A549 (cell line): ENCODE measurements at regions of chr20 and their contacts with region 1.

Region 1: GRCh38 chr20:34955232-34956040 is at the starts of genes GSS and MYH7B:
- DNase-seq: peak; percentile 96 to 97
- ATAC-seq: peak; percentile 97 to 98
- H3K4me3 ChIP-seq: peak within 1 kb of the TSS; percentile 59
- H3K27ac ChIP-seq: peak within 1 kb of the TSS; percentile 82 to 94
- H3K4me1 ChIP-seq: peaks cover 11% of the 10 kb centered on the region
- CTCF ChIP-seq: peak; percentile 62
- EP300 ChIP-seq: no peak
- POLR2A ChIP-seq: peak; percentile 95
- RAD21 ChIP-seq: peak; percentile 70 to 86
- polyA plus RNA-seq, gene GSS: 92.4 and 107 TPM in 2 replicates
- polyA plus RNA-seq, gene MYH7B: 0.03 and 0.04 TPM in 2 replicates

Region 2: DNA sequence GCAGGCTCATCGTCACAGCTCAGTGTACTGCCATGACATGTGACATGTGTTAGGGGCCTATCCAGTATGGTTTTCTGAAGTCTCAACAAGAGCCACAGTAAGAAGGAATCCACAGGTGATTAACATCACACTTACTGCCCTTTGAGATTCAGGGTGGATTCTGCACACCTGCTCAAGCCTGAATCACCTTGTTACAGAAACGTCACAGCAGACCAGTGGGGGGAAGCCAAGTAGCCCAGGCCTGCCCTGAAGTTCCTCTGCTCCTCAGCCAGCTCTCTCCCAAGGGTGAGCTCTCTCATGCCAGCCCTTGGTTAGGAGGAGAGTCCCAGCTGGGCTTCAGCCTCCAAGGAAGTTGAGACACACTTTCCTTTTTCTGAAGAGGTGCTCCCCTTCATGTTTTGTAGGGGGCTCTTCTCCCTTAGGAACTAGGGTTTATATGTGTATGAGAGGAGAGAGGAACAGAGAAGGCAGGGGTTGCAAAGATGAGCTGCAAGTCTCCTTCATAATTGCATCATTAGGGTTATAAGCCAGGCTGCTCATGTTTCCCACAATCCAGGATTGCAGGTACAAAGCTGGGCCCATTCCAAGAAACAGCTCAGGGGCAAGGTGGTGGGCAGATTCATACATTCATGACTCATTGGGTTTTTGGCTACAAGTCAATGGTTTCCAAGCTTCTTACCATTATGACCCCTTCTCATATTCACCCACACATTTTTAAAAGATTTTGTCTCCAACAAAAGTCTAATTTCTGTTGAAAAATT is 11.4 kb before region 1 on chr20:
- CTCF ChIA-PET with region 1: interaction called, 19 read pairs
- POLR2A ChIA-PET with region 1: interaction called, 3 read pairs
- DNase-seq: no peak
- ATAC-seq: no peak
- H3K4me3 ChIP-seq: no peak overlapping the region
- H3K27ac ChIP-seq: peak overlapping the region; percentile 57 to 75; a peak in 5 of 6 replicates
- H3K4me1 ChIP-seq: peaks cover 10% of the 10 kb centered on the region; the same call in 2 of the 3 replicates
- CTCF ChIP-seq: no peak
- EP300 ChIP-seq: no peak
- POLR2A ChIP-seq: no peak
- RAD21 ChIP-seq: no peak

Region 3: DNA sequence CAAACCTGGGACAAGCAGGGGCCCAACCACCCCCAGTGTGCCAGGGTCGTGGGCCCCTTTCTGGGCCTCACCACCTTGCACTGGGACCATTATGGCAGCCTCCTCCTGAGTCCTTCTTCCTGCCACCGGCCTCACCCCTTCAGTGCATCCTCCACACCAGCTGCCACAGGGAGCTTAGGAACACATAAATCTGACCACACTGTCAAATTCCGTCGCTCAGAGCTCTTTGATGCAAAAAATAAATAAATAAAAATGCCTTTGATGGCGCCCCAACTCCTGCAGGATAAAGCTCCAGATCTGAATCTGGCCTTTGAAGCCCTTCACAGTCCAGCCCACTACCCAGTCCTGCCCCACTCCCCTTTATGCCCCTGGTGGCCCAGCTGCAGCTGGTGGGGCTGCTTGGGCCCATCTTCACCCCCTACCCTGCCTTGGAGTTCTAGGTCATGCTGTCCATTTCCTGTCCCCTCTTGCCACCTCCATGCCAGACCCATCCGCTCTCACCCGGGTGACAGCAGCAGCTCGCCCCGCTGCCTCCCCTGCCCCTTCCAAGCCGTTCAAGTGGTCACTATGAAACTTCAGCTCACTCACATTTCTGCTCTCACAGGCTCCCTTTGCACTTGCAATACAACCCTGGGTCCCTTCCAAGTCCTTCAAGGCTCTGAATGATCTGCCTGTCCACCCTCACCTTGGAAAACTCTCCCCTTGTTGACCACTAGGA is 16.3 kb after region 1 on chr20:
- CTCF ChIA-PET with region 1: interaction called, 16 read pairs
- POLR2A ChIA-PET with region 1: interaction called, 3 read pairs
- DNase-seq: no peak
- ATAC-seq: no peak
- H3K4me3 ChIP-seq: no peak overlapping the region
- H3K27ac ChIP-seq: no peak overlapping the region
- H3K4me1 ChIP-seq: no peaks in the 10 kb centered on the region
- CTCF ChIP-seq: no peak
- EP300 ChIP-seq: no peak
- POLR2A ChIP-seq: no peak
- RAD21 ChIP-seq: no peak

Region 4: GRCh38 chr20:35166242-35166830 is 210.9 kb after region 1 on chr20:
- CTCF ChIA-PET with region 1: no interaction called
- POLR2A ChIA-PET with region 1: no interaction called
- DNase-seq: no peak
- ATAC-seq: peak; percentile 43 to 61; a peak in 5 of 6 replicates
- H3K4me3 ChIP-seq: no peak overlapping the region
- H3K27ac ChIP-seq: peak overlapping the region in 1 of 2 experiments; percentile 52; a peak in 2 of 6 replicates
- H3K4me1 ChIP-seq: peaks cover 5% of the 10 kb centered on the region
- CTCF ChIP-seq: no peak
- EP300 ChIP-seq: no peak
- POLR2A ChIP-seq: no peak
- RAD21 ChIP-seq: no peak